ENCODE measurements at regions of chr11 and their contacts with region 1.

Region 1: DNA sequence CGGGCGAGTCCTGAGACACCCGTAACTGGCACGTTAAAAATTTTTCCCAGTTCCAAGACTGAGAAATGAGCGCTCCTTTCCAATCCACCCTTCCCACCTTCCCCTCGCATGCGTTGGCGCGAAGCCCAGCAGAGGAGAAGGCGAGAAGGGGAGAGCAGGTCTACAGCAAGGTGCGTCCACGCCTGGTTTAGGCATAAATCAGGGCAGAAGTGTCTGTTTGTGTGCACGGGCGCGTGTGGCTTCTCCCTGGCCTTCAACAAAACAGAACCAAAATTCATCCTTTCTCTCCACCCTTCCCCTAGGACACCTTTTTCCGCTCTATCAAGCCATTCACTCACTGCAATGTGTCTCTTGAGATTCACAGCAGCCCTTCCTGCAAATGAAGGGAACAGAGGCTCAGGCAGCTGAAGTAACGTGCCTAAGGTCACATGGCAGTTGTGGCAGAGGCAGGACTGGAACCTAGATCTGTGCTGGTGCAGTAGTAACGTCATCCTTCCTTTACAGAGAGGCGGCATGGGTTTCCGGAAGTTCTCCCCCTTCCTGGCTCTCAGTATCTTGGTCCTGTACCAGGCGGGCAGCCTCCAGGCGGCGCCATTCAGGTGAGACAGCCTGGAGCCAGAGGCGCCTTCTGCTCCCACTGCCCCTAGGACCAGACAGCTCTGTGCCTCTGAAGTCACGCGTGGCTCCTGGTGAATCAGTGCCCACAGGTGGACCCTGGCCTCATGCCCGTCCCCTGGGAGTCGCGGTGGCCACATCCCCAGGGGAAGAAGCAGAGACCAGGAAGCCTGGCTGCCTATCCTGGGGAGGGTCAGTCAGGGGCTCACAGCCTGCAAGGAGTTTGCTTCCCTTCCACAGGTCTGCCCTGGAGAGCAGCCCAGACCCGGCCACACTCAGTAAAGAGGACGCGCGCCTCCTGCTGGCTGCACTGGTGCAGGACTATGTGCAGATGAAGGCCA is 1.1 kb downstream of the CALCB start:
- DNase-seq: peak; percentile 87
- H3K4me3 Mint-ChIP-seq: peak overlapping the region; percentile 4
- H3K27ac Mint-ChIP-seq: no peak overlapping the region
- H3K4me1 Mint-ChIP-seq: peaks cover 6% of the 10 kb centered on the region
- H3K27me3 Mint-ChIP-seq: no peaks in the 10 kb centered on the region
- CTCF ChIP-seq: peak; percentile 84

Region 2: GRCh38 chr11:14587258-14587657 is 487.2 kb before region 1 on chr11:
- CTCF ChIA-PET with region 1: no interaction called
- POLR2A ChIA-PET with region 1: no interaction called
- intact Hi-C with region 1: no loop called
- DNase-seq: no peak
- H3K4me3 Mint-ChIP-seq: no peak overlapping the region
- H3K27ac Mint-ChIP-seq: no peak overlapping the region
- H3K4me1 Mint-ChIP-seq: no peaks in the 10 kb centered on the region
- H3K27me3 Mint-ChIP-seq: no peaks in the 10 kb centered on the region
- CTCF ChIP-seq: no peak

Region 3: GRCh38 chr11:14803846-14804245 is 270.6 kb before region 1 on chr11:
- CTCF ChIA-PET with region 1: interaction called, 10 read pairs
- POLR2A ChIA-PET with region 1: no interaction called
- intact Hi-C with region 1: no loop called
- DNase-seq: no peak
- H3K4me3 Mint-ChIP-seq: no peak overlapping the region
- H3K27ac Mint-ChIP-seq: no peak overlapping the region
- H3K4me1 Mint-ChIP-seq: no peaks in the 10 kb centered on the region
- H3K27me3 Mint-ChIP-seq: peaks cover 26% of the 10 kb centered on the region
- CTCF ChIP-seq: no peak

Region 4: DNA sequence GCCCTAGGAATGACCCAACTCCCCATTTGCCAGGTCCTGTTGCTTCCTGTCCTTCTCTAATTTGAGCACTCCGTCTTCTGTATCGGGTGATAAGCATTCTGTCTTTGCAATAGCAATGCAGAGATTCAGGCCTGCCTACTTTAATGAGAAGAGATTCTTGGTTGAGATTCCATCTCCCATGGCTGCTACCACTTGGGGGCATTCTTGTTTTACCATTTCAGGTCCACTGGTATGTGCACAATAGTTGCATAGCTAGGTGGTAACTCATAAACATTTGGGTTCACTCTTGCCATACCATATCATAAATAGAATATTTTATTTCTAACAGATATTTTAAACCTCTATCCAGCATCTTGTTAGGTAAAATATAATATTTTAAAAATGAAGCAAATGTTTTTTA is 35.5 kb before region 1 on chr11:
- CTCF ChIA-PET with region 1: interaction called, 27 read pairs
- POLR2A ChIA-PET with region 1: no interaction called
- intact Hi-C with region 1: loop called (anchors 1 kb)
- DNase-seq: peak; percentile 67
- H3K4me3 Mint-ChIP-seq: no peak overlapping the region
- H3K27ac Mint-ChIP-seq: no peak overlapping the region
- H3K4me1 Mint-ChIP-seq: no peaks in the 10 kb centered on the region
- H3K27me3 Mint-ChIP-seq: no peaks in the 10 kb centered on the region
- CTCF ChIP-seq: peak; percentile 64

Region 5: GRCh38 chr11:15059132-15059915 is 15.2 kb before region 1 on chr11:
- CTCF ChIA-PET with region 1: interaction called, 22 read pairs
- POLR2A ChIA-PET with region 1: no interaction called
- intact Hi-C with region 1: no loop called
- DNase-seq: peak; percentile 14
- H3K4me3 Mint-ChIP-seq: no peak overlapping the region
- H3K27ac Mint-ChIP-seq: no peak overlapping the region
- H3K4me1 Mint-ChIP-seq: peaks cover 7% of the 10 kb centered on the region
- H3K27me3 Mint-ChIP-seq: no peaks in the 10 kb centered on the region
- CTCF ChIP-seq: no peak

Region 6: GRCh38 chr11:15101072-15101709 is 26.7 kb after region 1 on chr11:
- CTCF ChIA-PET with region 1: interaction called, 27 read pairs
- POLR2A ChIA-PET with region 1: no interaction called
- intact Hi-C with region 1: no loop called
- DNase-seq: peak; percentile 80
- H3K4me3 Mint-ChIP-seq: no peak overlapping the region
- H3K27ac Mint-ChIP-seq: no peak overlapping the region
- H3K4me1 Mint-ChIP-seq: peaks cover 21% of the 10 kb centered on the region
- H3K27me3 Mint-ChIP-seq: no peaks in the 10 kb centered on the region
- CTCF ChIP-seq: peak; percentile 93

Region 7: DNA sequence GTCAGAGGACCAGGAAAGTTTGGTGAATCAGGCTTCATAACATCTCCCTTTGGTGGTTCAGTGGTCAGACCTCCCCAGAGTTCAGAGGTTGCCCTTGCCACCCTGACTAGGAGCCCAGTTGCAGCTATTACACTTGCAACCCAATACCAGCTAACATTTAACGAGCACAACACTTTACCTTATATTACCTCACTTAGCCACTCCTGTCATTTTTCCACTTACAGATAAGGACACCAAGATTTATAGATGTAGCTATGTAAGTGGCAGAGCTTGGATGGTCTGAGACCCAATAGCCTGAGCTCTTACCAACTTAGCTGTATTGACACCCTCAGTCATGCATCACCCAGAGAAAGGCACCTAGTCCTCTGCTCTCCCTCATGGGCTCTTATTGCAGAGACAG is 274.9 kb after region 1 on chr11:
- CTCF ChIA-PET with region 1: no interaction called
- POLR2A ChIA-PET with region 1: no interaction called
- intact Hi-C with region 1: no loop called
- DNase-seq: no peak
- H3K4me3 Mint-ChIP-seq: no peak overlapping the region
- H3K27ac Mint-ChIP-seq: no peak overlapping the region
- H3K4me1 Mint-ChIP-seq: peaks cover 4% of the 10 kb centered on the region
- H3K27me3 Mint-ChIP-seq: peaks cover 32% of the 10 kb centered on the region
- CTCF ChIP-seq: no peak

Measured in MCF 10A (cell line).